CD14-positive monocyte (primary cell): ENCODE measurements at regions of chrX and their contacts with region 1.

Region 1: GRCh38 chrX:101415180-101416145 is 7.4 kb downstream of the HNRNPH2 start:
- DNase-seq: peak; percentile 42 to 73 (median 62)
- H3K4me3 ChIP-seq: no peak overlapping the region
- H3K4me3 Mint-ChIP-seq: peak overlapping the region in 1 of 2 donors; percentile 16
- H3K27ac ChIP-seq: no peak overlapping the region
- H3K27ac Mint-ChIP-seq: peak overlapping the region in 3 of 7 donors; percentile 33 to 42 (median 37)
- H3K4me1 ChIP-seq: peaks cover 21 to 30% of the 10 kb centered on the region in 2 donors
- H3K4me1 Mint-ChIP-seq: peaks cover 37% of the 10 kb centered on the region
- H3K27me3 ChIP-seq: no peaks in the 10 kb centered on the region
- H3K27me3 Mint-ChIP-seq: peaks cover 0 to 14% (median 0%) of the 10 kb centered on the region in 3 donors
- CTCF ChIP-seq: peak; percentile 63

Region 2: DNA sequence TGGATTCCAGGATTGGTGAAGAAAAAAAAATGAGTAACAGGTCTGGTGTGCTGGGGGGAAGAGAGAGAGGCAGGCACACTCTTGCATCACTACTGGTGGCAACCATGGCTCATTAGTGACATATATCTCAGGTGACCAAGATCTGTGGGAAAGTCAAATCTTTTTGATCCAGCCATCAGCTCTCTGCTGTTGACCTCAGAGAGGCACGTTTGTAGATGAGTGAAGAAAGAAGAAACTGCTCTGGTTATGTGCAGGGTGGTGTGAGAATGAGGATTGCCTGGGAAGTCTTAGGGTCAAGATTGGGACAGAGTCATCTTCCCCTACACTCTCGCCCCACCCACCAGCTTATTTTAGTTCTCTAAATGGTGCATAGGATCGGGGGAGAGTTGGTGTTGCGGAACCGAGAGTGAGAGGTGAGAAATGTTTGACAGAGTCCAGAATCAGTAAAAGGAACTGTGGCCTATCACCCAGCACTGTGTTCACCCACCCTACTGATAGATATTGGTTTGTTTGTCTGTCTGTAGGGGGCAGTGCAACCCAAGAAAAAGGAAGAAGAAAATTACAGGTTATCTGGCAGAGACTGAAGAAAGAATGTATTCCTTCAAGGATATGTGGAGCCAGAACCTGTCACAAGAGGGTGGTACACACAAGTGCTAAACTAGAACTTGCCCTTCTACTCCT is 180.4 kb after region 1 on chrX:
- intact Hi-C with region 1: loop called in 1 of 2 experiments (anchors 5 kb)
- DNase-seq: peak; percentile 44 to 64 (median 46)
- H3K4me3 ChIP-seq: no peak overlapping the region
- H3K4me3 Mint-ChIP-seq: no peak overlapping the region
- H3K27ac ChIP-seq: no peak overlapping the region
- H3K27ac Mint-ChIP-seq: no peak overlapping the region
- H3K4me1 ChIP-seq: no peaks in the 10 kb centered on the region
- H3K4me1 Mint-ChIP-seq: peaks cover 6% of the 10 kb centered on the region
- H3K27me3 ChIP-seq: peaks cover 0 to 4% of the 10 kb centered on the region in 2 donors
- H3K27me3 Mint-ChIP-seq: peaks cover 4 to 8% (median 7%) of the 10 kb centered on the region in 3 donors
- CTCF ChIP-seq: peak; percentile 63